ENCODE measurements at regions of chr1 and their contacts with region 1.

Region 1: DNA sequence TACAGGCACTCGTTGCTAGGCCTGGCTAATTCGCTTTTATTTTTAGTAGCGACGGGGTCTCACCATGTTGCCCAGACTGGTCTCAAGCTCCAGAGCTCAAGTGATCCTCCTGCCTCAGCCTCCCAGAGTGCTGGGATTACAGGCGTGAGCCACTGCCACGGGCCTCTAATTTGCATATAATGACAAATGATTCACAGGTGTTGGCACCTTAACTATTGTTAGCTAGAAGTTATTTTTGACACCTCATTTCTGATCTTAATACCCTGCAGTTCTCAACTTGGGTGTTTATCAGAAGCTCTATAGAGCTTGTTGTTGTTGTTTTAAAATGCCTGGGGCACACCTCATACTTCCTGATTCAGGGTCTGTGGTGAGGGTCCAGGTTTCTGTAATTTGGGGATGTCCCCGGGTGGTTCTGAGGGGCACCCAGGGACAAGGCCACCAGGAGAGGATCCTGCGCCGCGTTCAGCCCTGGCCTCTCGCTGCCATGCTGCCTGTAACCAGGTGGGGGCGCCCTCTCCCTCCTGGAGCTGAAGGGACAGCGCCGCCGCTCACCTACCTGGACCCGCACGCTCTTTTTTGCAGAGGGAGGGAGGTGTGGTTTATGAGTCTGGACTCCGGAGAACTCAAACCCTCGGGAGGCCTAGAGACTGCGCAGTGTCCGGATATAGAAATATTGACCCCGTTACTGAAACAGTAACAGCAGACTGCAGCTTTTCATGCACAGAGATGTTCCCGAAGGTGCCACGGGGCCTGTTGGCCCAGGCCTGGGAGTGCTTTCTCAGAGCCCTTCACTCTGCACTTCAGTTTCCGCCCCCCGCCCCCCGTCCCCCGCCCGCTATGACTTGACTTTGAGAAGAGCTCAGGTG is 23.0 kb upstream of the NEK2 start:
- DNase-seq: peak; percentile 93
- H3K4me3 Mint-ChIP-seq: no peak overlapping the region
- H3K27ac Mint-ChIP-seq: no peak overlapping the region
- H3K4me1 Mint-ChIP-seq: no peaks in the 10 kb centered on the region
- H3K27me3 Mint-ChIP-seq: no peaks in the 10 kb centered on the region
- CTCF ChIP-seq: peak; percentile 100

Region 2: GRCh38 chr1:211371406-211372105 is 326.8 kb before region 1 on chr1:
- CTCF ChIA-PET with region 1: no interaction called
- POLR2A ChIA-PET with region 1: no interaction called
- intact Hi-C with region 1: no loop called
- DNase-seq: peak; percentile 53
- H3K4me3 Mint-ChIP-seq: peak overlapping the region; percentile 1
- H3K27ac Mint-ChIP-seq: peak overlapping the region; percentile 75
- H3K4me1 Mint-ChIP-seq: peaks cover 25% of the 10 kb centered on the region
- H3K27me3 Mint-ChIP-seq: no peaks in the 10 kb centered on the region
- CTCF ChIP-seq: no peak

Region 3: GRCh38 chr1:211711315-211711705 is 12.9 kb after region 1 on chr1:
- CTCF ChIA-PET with region 1: interaction called, 79 read pairs
- POLR2A ChIA-PET with region 1: interaction called, 3 read pairs
- intact Hi-C with region 1: no loop called
- DNase-seq: no peak
- H3K4me3 Mint-ChIP-seq: no peak overlapping the region
- H3K27ac Mint-ChIP-seq: no peak overlapping the region
- H3K4me1 Mint-ChIP-seq: peaks cover 15% of the 10 kb centered on the region
- H3K27me3 Mint-ChIP-seq: no peaks in the 10 kb centered on the region
- CTCF ChIP-seq: no peak

Region 4: DNA sequence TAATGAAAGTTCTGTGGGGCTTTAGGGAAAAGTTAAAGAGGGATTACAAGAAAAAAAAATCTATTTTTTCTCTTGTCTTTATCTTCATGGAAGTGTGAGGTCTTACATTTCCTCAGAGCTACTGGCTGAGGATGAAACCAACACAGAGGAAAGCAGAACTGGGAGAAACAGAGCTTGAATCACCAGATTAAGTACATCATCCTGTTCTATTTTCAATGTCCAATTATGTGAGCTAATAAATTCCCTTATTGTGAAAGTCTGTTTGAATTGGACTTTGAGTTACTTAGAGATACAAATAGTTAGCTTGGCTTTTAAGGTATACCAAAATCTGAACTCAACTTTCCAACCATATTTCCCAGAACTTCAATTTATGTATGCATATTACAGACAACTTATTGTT is 63.0 kb after region 1 on chr1:
- CTCF ChIA-PET with region 1: interaction called, 12 read pairs
- POLR2A ChIA-PET with region 1: interaction called, 3 read pairs
- intact Hi-C with region 1: no loop called
- DNase-seq: no peak
- H3K4me3 Mint-ChIP-seq: no peak overlapping the region
- H3K27ac Mint-ChIP-seq: no peak overlapping the region
- H3K4me1 Mint-ChIP-seq: no peaks in the 10 kb centered on the region
- H3K27me3 Mint-ChIP-seq: no peaks in the 10 kb centered on the region
- CTCF ChIP-seq: no peak

Region 5: DNA sequence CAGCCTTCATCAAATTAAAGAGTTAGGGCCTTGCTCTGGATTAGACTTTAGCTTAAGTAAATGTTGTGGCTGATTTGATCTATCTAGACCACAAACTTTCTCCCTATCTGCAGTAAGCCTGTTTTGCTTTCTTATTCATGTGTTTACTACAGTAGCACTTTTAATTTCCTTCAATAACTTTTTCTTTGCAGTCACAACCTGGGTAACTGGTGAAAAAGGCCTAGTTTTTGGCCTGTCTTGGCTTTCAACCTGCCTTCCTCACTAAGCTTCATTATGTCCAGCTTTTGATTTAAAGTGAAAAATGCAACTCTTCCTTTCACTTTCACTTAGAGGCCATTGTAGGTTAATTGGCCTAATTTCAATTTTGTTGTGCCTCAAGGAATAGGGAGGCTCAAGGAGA is 144.6 kb after region 1 on chr1:
- CTCF ChIA-PET with region 1: interaction called, 91 read pairs
- POLR2A ChIA-PET with region 1: interaction called, 4 read pairs
- intact Hi-C with region 1: no loop called
- DNase-seq: peak; percentile 38
- H3K4me3 Mint-ChIP-seq: no peak overlapping the region
- H3K27ac Mint-ChIP-seq: no peak overlapping the region
- H3K4me1 Mint-ChIP-seq: peaks cover 10% of the 10 kb centered on the region
- H3K27me3 Mint-ChIP-seq: no peaks in the 10 kb centered on the region
- CTCF ChIP-seq: no peak

Region 6: GRCh38 chr1:211928993-211929637 is 230.7 kb after region 1 on chr1:
- CTCF ChIA-PET with region 1: interaction called, 20 read pairs
- POLR2A ChIA-PET with region 1: interaction called, 3 read pairs
- intact Hi-C with region 1: no loop called
- DNase-seq: peak; percentile 96
- H3K4me3 Mint-ChIP-seq: peak overlapping the region; percentile 62
- H3K27ac Mint-ChIP-seq: peak overlapping the region; percentile 95
- H3K4me1 Mint-ChIP-seq: peaks cover 21% of the 10 kb centered on the region
- H3K27me3 Mint-ChIP-seq: no peaks in the 10 kb centered on the region
- CTCF ChIP-seq: no peak

Region 7: GRCh38 chr1:211975152-211975941 is 277.0 kb after region 1 on chr1:
- CTCF ChIA-PET with region 1: interaction called, 17 read pairs
- POLR2A ChIA-PET with region 1: no interaction called
- intact Hi-C with region 1: no loop called
- DNase-seq: no peak
- H3K4me3 Mint-ChIP-seq: no peak overlapping the region
- H3K27ac Mint-ChIP-seq: peak overlapping the region; percentile 43
- H3K4me1 Mint-ChIP-seq: no peaks in the 10 kb centered on the region
- H3K27me3 Mint-ChIP-seq: no peaks in the 10 kb centered on the region
- CTCF ChIP-seq: no peak

Region 8: DNA sequence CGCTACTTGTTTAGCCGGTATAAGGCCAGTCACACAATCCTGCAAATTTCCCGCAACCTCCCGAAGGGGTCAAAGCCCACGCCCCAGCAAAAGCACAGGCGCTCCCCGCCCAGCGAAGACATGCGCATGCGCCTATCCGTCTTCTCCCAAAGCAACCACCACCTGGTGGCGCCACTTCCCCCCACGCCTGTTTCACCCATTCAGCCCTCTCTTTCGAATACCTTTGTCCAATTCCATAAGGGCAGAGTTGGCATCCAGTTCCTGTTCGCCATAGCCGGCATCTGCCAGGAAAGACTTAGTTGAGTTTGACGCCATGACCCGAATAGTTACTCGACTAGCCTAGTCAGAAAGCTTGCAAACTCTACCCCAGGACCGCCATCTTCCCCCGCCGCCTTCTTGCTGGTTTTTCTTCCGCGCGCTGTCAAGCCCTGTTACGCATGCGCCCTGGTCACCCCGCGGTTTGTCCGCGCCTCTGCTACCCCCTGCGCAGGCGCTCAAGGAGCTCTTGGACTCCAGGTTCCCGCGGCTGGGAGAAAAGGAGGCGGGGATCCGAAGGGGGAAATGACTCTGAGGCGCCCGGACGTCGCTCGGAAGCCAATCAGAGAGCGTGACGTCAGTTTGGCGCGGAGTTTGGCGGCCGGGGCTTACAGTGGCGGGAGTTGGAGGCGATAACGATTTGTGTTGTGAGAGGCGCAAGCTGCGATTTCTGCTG is 336.9 kb after region 1 on chr1 and contains the starts of genes DTL and INTS7:
- CTCF ChIA-PET with region 1: interaction called, 43 read pairs
- POLR2A ChIA-PET with region 1: interaction called, 6 read pairs
- intact Hi-C with region 1: loop called (anchors 1 kb)
- DNase-seq: peak; percentile 100
- H3K4me3 Mint-ChIP-seq: peak within 1 kb of the TSS; percentile 88
- H3K27ac Mint-ChIP-seq: peak within 1 kb of the TSS; percentile 89
- H3K4me1 Mint-ChIP-seq: peaks cover 65% of the 10 kb centered on the region
- H3K27me3 Mint-ChIP-seq: no peaks in the 10 kb centered on the region
- CTCF ChIP-seq: peak; percentile 99
- total RNA-seq, gene DTL: 20.2 and 34.4 TPM in 2 replicates
- total RNA-seq, gene INTS7: 50.0 and 62.3 TPM in 2 replicates